ENCODE measurements at regions of chr17 and their contacts with region 1.

Region 1: GRCh38 chr17:56939901-56940343 is 20.9 kb downstream of the COIL start:
- DNase-seq: peak in 1 of 2 donors; percentile 78
- H3K4me3 ChIP-seq: no peak overlapping the region
- H3K27ac ChIP-seq: no peak overlapping the region
- H3K4me1 ChIP-seq: peaks cover 0 to 13% (median 0%) of the 10 kb centered on the region in 4 donors
- H3K27me3 ChIP-seq: no peaks in the 10 kb centered on the region
- CTCF ChIP-seq: peak in 5 of 7 experiments; percentile 40 to 69 (median 52)
- EP300 ChIP-seq: no peak
- POLR2A ChIP-seq: no peak

Region 2: GRCh38 chr17:56819431-56820145 is 120.3 kb before region 1 on chr17:
- intact Hi-C with region 1: loop called (anchors 5 kb)
- DNase-seq: peak; percentile 76 to 90
- H3K4me3 ChIP-seq: no peak overlapping the region
- H3K27ac ChIP-seq: no peak overlapping the region
- H3K4me1 ChIP-seq: peaks cover 0 to 10% (median 6%) of the 10 kb centered on the region in 4 donors
- H3K27me3 ChIP-seq: no peaks in the 10 kb centered on the region
- CTCF ChIP-seq: peak in 5 of 7 experiments; percentile 69 to 91 (median 84)
- EP300 ChIP-seq: no peak
- POLR2A ChIP-seq: no peak